ENCODE measurements at regions of chr1 and their contacts with region 1.

Region 1: GRCh38 chr1:225896937-225897549 is 8.1 kb upstream of the LEFTY1 start:
- DNase-seq: peak in 8 of 9 donors; percentile 70 to 92 (median 88)
- ATAC-seq: peak; percentile 97
- H3K4me3 ChIP-seq: peak overlapping the region; percentile 50
- H3K4me3 Mint-ChIP-seq: peak overlapping the region; percentile 74 to 89 (median 84)
- H3K27ac ChIP-seq: peak overlapping the region; percentile 85
- H3K27ac Mint-ChIP-seq: peak overlapping the region; percentile 89 to 100 (median 97)
- H3K4me1 ChIP-seq: peaks cover 35 to 45% of the 10 kb centered on the region in 2 donors
- H3K4me1 Mint-ChIP-seq: peaks cover 36 to 67% (median 54%) of the 10 kb centered on the region in 7 donors
- H3K27me3 ChIP-seq: no peaks in the 10 kb centered on the region
- H3K27me3 Mint-ChIP-seq: peaks cover 0 to 47% (median 0%) of the 10 kb centered on the region in 5 donors

Region 2: GRCh38 chr1:225441314-225442122 is 455.5 kb before region 1 on chr1:
- CTCF ChIA-PET with region 1: interaction called, 3 read pairs
- POLR2A ChIA-PET with region 1: interaction called, 10 read pairs
- intact Hi-C with region 1: no loop called
- DNase-seq: peak in 3 of 9 donors; percentile 15 to 16 (median 16)
- ATAC-seq: no peak
- H3K4me3 ChIP-seq: no peak overlapping the region
- H3K4me3 Mint-ChIP-seq: peak overlapping the region; percentile 25 to 77 (median 63)
- H3K27ac ChIP-seq: peak overlapping the region; percentile 49
- H3K27ac Mint-ChIP-seq: peak overlapping the region; percentile 76 to 94 (median 91)
- H3K4me1 ChIP-seq: peaks cover 18 to 50% of the 10 kb centered on the region in 2 donors
- H3K4me1 Mint-ChIP-seq: peaks cover 47 to 70% (median 62%) of the 10 kb centered on the region in 7 donors
- H3K27me3 ChIP-seq: no peaks in the 10 kb centered on the region
- H3K27me3 Mint-ChIP-seq: peaks cover 0 to 2% (median 0%) of the 10 kb centered on the region in 5 donors

Region 3: DNA sequence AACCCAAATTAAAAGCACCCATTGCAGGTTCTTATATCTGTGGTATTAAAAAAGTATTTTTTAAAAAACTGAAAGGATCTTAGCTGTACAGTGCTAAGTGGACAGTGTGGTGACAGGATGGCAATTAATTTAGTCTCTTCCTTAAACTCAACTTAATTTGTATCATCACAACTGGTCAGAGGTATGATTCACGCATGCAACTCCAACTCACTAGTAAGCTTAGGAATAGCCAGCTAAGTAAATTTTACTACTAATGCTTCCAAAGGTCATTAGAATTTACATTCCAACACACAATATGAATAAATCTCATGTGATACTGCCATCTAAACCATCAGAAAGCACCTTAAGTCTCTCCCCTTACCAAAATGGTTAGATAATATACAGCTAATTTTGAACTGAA is 279.6 kb before region 1 on chr1:
- CTCF ChIA-PET with region 1: no interaction called
- POLR2A ChIA-PET with region 1: no interaction called
- intact Hi-C with region 1: no loop called
- DNase-seq: no peak
- ATAC-seq: no peak
- H3K4me3 ChIP-seq: no peak overlapping the region
- H3K4me3 Mint-ChIP-seq: no peak overlapping the region
- H3K27ac ChIP-seq: no peak overlapping the region
- H3K27ac Mint-ChIP-seq: no peak overlapping the region
- H3K4me1 ChIP-seq: no peaks in the 10 kb centered on the region
- H3K4me1 Mint-ChIP-seq: no peaks in the 10 kb centered on the region
- H3K27me3 ChIP-seq: no peaks in the 10 kb centered on the region
- H3K27me3 Mint-ChIP-seq: peaks cover 0 to 4% (median 0%) of the 10 kb centered on the region in 5 donors

Region 4: GRCh38 chr1:225809842-225810578 is 87.0 kb before region 1 on chr1 and contains the start of gene EPHX1:
- CTCF ChIA-PET with region 1: no interaction called
- POLR2A ChIA-PET with region 1: no interaction called
- intact Hi-C with region 1: loop called in 1 of 2 experiments (anchors 1 kb)
- DNase-seq: peak; percentile 35 to 78 (median 54)
- ATAC-seq: peak; percentile 89
- H3K4me3 ChIP-seq: peak within 1 kb of the TSS; percentile 41
- H3K4me3 Mint-ChIP-seq: peak within 1 kb of the TSS; percentile 77 to 89 (median 85)
- H3K27ac ChIP-seq: peak within 1 kb of the TSS; percentile 29
- H3K27ac Mint-ChIP-seq: peak within 1 kb of the TSS in 7 of 9 donors; percentile 8 to 61 (median 34)
- H3K4me1 ChIP-seq: no peaks in the 10 kb centered on the region
- H3K4me1 Mint-ChIP-seq: peaks cover 0 to 19% (median 8%) of the 10 kb centered on the region in 7 donors
- H3K27me3 ChIP-seq: no peaks in the 10 kb centered on the region
- H3K27me3 Mint-ChIP-seq: peaks cover 0 to 23% (median 0%) of the 10 kb centered on the region in 5 donors
- total RNA-seq, gene EPHX1: 1.5 to 3.2 (median 2.0) TPM

Region 5: DNA sequence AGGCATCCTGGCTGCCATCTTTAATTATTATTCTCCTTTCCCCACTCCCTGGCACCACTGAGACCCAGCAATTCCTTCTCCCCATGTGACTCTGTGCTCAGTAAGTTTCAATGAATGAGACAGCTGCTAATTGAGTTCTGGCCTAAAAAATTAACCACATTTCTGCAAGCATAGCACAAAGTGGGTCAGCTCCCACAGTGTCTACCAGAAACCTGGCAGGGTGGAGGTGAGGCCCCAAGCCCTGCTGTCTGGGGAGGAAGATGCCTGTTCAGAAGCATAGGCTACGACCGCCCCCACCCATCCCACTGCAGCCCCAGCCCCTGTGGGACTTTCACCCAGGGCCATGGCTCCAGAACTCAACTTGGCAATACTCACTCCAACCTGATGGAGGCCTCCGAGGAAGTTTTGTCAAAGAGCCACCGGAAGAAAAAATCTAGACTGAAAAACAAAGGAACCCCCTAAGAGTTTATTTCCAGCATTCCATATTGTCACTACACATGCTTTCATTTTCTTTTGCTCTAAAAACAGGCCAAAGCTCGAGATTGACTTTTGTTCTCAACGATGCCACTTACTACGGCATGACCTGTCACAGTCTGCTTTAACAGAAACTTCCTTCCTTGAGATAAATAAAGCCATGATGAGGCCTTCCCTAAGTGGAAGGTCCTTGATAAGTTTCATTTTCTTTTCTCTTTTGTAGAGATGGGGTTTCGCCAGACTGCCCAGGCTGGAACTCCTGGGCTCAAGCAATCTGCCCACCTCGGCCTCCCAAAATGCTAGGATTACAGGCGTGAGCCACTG is 41.3 kb before region 1 on chr1:
- CTCF ChIA-PET with region 1: no interaction called
- POLR2A ChIA-PET with region 1: interaction called, 11 read pairs
- intact Hi-C with region 1: no loop called
- DNase-seq: no peak
- ATAC-seq: no peak
- H3K4me3 ChIP-seq: no peak overlapping the region
- H3K4me3 Mint-ChIP-seq: no peak overlapping the region
- H3K27ac ChIP-seq: no peak overlapping the region
- H3K27ac Mint-ChIP-seq: peak overlapping the region in 7 of 9 donors; percentile 36 to 81 (median 69)
- H3K4me1 ChIP-seq: peaks cover 0 to 12% of the 10 kb centered on the region in 2 donors
- H3K4me1 Mint-ChIP-seq: peaks cover 22 to 51% (median 33%) of the 10 kb centered on the region in 7 donors
- H3K27me3 ChIP-seq: no peaks in the 10 kb centered on the region
- H3K27me3 Mint-ChIP-seq: no peaks in the 10 kb centered on the region

Region 6: GRCh38 chr1:225866061-225866837 is 30.8 kb before region 1 on chr1:
- CTCF ChIA-PET with region 1: no interaction called
- POLR2A ChIA-PET with region 1: interaction called, 21 read pairs
- intact Hi-C with region 1: loop called in 1 of 2 experiments (anchors 1 kb)
- DNase-seq: peak in 8 of 9 donors; percentile 58 to 78 (median 68)
- ATAC-seq: peak; percentile 91
- H3K4me3 ChIP-seq: no peak overlapping the region
- H3K4me3 Mint-ChIP-seq: peak overlapping the region; percentile 44 to 80 (median 66)
- H3K27ac ChIP-seq: peak overlapping the region; percentile 68
- H3K27ac Mint-ChIP-seq: peak overlapping the region; percentile 68 to 94 (median 85)
- H3K4me1 ChIP-seq: peaks cover 25 to 32% of the 10 kb centered on the region in 2 donors
- H3K4me1 Mint-ChIP-seq: peaks cover 36 to 58% (median 51%) of the 10 kb centered on the region in 7 donors
- H3K27me3 ChIP-seq: no peaks in the 10 kb centered on the region
- H3K27me3 Mint-ChIP-seq: no peaks in the 10 kb centered on the region

Region 7: DNA sequence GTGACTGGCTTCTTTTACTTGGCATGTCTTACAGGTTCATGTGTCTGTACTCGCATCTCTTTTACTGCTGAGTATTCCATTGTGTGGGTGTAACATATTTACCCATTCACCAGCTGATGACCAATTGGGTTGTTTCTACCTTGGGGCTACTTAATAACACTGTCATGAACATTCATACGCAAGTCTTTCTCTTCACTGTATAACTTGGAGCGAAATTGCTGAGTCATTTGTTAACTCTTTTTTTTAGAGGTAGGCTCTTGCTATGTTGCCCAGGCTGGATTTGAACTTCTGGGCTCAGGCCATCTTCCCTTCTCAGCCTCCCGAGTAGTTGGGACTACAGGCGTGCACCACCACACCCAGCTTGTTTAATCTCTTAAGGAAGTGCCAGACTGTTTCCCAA is 20.5 kb after region 1 on chr1:
- CTCF ChIA-PET with region 1: interaction called, 3 read pairs
- POLR2A ChIA-PET with region 1: interaction called, 55 read pairs
- intact Hi-C with region 1: no loop called
- DNase-seq: no peak
- ATAC-seq: no peak
- H3K4me3 ChIP-seq: no peak overlapping the region
- H3K4me3 Mint-ChIP-seq: no peak overlapping the region
- H3K27ac ChIP-seq: no peak overlapping the region
- H3K27ac Mint-ChIP-seq: peak overlapping the region in 3 of 9 donors; percentile 3 to 45 (median 30)
- H3K4me1 ChIP-seq: peaks cover 1 to 33% of the 10 kb centered on the region in 2 donors
- H3K4me1 Mint-ChIP-seq: peaks cover 26 to 48% (median 38%) of the 10 kb centered on the region in 7 donors
- H3K27me3 ChIP-seq: no peaks in the 10 kb centered on the region
- H3K27me3 Mint-ChIP-seq: no peaks in the 10 kb centered on the region

Region 8: GRCh38 chr1:225923692-225924555 is 26.9 kb after region 1 on chr1 and contains the start of gene PYCR2:
- CTCF ChIA-PET with region 1: interaction called, 3 read pairs
- POLR2A ChIA-PET with region 1: interaction called, 55 read pairs
- intact Hi-C with region 1: loop called (anchors 1 kb)
- DNase-seq: peak; percentile 92 to 97 (median 94)
- ATAC-seq: peak; percentile 99
- H3K4me3 ChIP-seq: peak within 1 kb of the TSS; percentile 100
- H3K4me3 Mint-ChIP-seq: peak within 1 kb of the TSS; percentile 86 to 98 (median 94)
- H3K27ac ChIP-seq: peak within 1 kb of the TSS; percentile 95
- H3K27ac Mint-ChIP-seq: peak within 1 kb of the TSS; percentile 90 to 98 (median 95)
- H3K4me1 ChIP-seq: peaks cover 11 to 65% of the 10 kb centered on the region in 2 donors
- H3K4me1 Mint-ChIP-seq: peaks cover 45 to 75% (median 60%) of the 10 kb centered on the region in 7 donors
- H3K27me3 ChIP-seq: no peaks in the 10 kb centered on the region
- H3K27me3 Mint-ChIP-seq: no peaks in the 10 kb centered on the region
- total RNA-seq, gene PYCR2: 46.4 to 137 (median 109) TPM